CD4-positive, alpha-beta T cell (primary cell): ENCODE measurements at regions of chr12 and their contacts with region 1.

Region 1: DNA sequence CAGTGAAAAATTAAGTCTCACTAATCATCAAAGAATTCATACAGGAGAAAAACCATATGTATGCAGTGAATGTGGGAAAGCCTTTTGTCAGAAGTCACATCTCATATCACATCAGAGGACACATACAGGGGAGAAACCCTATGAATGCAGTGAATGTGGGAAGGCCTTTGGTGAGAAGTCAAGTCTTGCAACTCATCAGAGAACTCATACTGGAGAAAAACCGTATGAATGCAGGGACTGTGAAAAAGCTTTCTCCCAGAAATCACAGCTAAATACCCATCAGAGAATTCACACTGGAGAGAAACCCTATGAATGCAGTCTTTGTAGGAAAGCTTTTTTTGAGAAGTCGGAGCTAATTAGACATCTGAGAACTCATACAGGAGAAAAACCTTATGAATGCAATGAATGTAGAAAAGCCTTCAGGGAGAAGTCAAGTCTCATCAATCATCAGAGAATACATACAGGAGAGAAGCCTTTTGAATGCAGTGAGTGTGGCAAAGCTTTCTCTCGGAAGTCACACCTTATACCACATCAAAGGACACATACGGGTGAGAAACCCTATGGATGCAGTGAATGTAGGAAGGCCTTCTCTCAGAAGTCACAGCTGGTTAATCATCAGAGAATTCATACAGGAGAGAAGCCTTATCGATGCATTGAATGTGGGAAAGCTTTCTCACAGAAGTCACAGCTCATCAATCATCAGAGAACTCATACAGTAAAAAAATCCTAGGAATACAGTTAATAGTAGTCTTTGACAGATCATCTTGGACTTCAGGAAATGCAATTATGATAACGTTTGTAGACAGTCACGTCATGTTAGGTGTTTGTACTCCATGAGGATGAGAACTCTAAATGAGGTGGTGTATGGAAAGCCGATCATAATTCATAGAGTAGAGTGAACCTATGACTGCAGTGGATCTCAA is 21.2 kb downstream of the ZNF84 start:
- DNase-seq: peak in 1 of 14 experiments; percentile 7
- ATAC-seq: no peak
- H3K4me3 ChIP-seq: no peak overlapping the region
- H3K4me3 Mint-ChIP-seq: no peak overlapping the region
- H3K27ac ChIP-seq: no peak overlapping the region
- H3K27ac Mint-ChIP-seq: no peak overlapping the region
- H3K4me1 ChIP-seq: no peaks in the 10 kb centered on the region
- H3K4me1 Mint-ChIP-seq: no peaks in the 10 kb centered on the region
- H3K27me3 ChIP-seq: no peaks in the 10 kb centered on the region
- H3K27me3 Mint-ChIP-seq: no peaks in the 10 kb centered on the region
- CTCF ChIP-seq: no peak

Region 2: DNA sequence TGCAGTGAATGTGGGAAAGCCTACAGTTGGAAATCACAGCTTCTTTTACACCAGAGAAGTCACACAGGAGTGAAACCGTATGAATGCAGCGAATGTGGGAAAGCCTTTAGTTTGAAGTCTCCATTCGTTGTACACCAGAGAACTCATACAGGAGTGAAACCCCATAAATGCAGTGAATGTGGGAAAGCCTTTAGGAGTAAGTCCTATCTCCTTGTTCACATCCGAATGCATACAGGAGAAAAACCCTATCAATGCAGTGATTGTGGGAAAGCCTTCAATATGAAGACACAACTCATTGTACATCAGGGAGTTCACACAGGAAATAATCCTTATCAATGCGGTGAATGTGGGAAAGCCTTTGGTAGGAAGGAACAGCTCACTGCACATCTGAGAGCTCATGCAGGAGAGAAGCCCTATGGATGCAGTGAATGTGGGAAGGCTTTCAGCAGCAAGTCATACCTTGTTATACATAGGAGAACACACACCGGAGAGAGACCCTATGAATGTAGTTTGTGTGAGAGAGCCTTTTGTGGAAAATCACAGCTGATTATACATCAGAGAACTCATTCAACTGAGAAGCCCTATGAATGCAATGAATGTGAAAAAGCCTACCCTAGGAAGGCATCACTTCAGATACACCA is 47.7 kb before region 1 on chr12:
- CTCF ChIA-PET with region 1: no interaction called
- POLR2A ChIA-PET with region 1: no interaction called
- intact Hi-C with region 1: loop called in 1 of 2 experiments (anchors 5 kb)
- DNase-seq: no peak
- ATAC-seq: no peak
- H3K4me3 ChIP-seq: no peak overlapping the region
- H3K4me3 Mint-ChIP-seq: no peak overlapping the region
- H3K27ac ChIP-seq: no peak overlapping the region
- H3K27ac Mint-ChIP-seq: no peak overlapping the region
- H3K4me1 ChIP-seq: no peaks in the 10 kb centered on the region
- H3K4me1 Mint-ChIP-seq: no peaks in the 10 kb centered on the region
- H3K27me3 ChIP-seq: no peaks in the 10 kb centered on the region
- H3K27me3 Mint-ChIP-seq: no peaks in the 10 kb centered on the region
- CTCF ChIP-seq: no peak

Region 3: DNA sequence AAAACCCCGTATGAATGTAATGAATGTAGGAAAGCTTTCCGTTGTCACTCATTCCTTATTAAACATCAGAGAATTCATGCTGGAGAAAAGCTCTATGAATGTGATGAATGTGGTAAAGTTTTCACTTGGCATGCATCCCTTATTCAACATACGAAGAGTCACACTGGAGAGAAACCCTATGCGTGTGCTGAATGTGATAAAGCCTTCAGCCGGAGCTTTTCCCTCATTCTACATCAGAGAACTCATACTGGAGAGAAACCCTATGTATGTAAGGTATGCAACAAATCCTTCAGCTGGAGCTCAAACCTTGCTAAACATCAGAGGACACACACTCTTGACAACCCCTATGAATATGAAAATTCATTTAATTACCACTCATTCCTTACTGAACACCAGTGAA is 47.8 kb after region 1 on chr12:
- CTCF ChIA-PET with region 1: no interaction called
- POLR2A ChIA-PET with region 1: no interaction called
- intact Hi-C with region 1: loop called in 1 of 2 experiments (anchors 5 kb)
- DNase-seq: peak in 1 of 14 experiments; percentile 1
- ATAC-seq: no peak
- H3K4me3 ChIP-seq: no peak overlapping the region
- H3K4me3 Mint-ChIP-seq: no peak overlapping the region
- H3K27ac ChIP-seq: no peak overlapping the region
- H3K27ac Mint-ChIP-seq: no peak overlapping the region
- H3K4me1 ChIP-seq: no peaks in the 10 kb centered on the region
- H3K4me1 Mint-ChIP-seq: no peaks in the 10 kb centered on the region
- H3K27me3 ChIP-seq: no peaks in the 10 kb centered on the region
- H3K27me3 Mint-ChIP-seq: no peaks in the 10 kb centered on the region
- CTCF ChIP-seq: no peak

Region 4: DNA sequence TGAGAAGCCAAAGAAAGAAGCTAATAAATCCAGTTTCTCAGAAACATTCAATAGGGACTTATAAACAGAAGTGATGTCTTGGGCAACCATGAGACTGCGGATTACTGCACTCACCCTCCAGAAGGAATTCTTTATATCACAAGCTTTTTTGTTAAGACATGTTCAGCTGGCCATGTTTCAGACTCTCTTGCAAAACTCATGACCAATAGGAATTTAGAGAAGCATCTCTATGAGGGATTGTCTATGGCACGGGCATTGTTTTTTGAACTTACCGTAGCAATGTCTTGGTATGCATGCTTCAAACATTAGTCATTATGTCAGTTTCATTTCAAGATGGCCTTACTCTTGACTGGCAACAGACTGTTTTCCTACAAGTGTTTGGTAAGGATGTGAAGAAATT is 107.3 kb after region 1 on chr12:
- CTCF ChIA-PET with region 1: no interaction called
- POLR2A ChIA-PET with region 1: no interaction called
- intact Hi-C with region 1: no loop called
- DNase-seq: no peak
- ATAC-seq: no peak
- H3K4me3 ChIP-seq: no peak overlapping the region
- H3K4me3 Mint-ChIP-seq: no peak overlapping the region
- H3K27ac ChIP-seq: no peak overlapping the region
- H3K27ac Mint-ChIP-seq: no peak overlapping the region
- H3K4me1 ChIP-seq: no peaks in the 10 kb centered on the region
- H3K4me1 Mint-ChIP-seq: no peaks in the 10 kb centered on the region
- H3K27me3 ChIP-seq: no peaks in the 10 kb centered on the region
- H3K27me3 Mint-ChIP-seq: no peaks in the 10 kb centered on the region
- CTCF ChIP-seq: no peak